CD8-positive, alpha-beta T cell (primary cell): ENCODE measurements at regions of chr14 and their contacts with region 1.

Region 1: DNA sequence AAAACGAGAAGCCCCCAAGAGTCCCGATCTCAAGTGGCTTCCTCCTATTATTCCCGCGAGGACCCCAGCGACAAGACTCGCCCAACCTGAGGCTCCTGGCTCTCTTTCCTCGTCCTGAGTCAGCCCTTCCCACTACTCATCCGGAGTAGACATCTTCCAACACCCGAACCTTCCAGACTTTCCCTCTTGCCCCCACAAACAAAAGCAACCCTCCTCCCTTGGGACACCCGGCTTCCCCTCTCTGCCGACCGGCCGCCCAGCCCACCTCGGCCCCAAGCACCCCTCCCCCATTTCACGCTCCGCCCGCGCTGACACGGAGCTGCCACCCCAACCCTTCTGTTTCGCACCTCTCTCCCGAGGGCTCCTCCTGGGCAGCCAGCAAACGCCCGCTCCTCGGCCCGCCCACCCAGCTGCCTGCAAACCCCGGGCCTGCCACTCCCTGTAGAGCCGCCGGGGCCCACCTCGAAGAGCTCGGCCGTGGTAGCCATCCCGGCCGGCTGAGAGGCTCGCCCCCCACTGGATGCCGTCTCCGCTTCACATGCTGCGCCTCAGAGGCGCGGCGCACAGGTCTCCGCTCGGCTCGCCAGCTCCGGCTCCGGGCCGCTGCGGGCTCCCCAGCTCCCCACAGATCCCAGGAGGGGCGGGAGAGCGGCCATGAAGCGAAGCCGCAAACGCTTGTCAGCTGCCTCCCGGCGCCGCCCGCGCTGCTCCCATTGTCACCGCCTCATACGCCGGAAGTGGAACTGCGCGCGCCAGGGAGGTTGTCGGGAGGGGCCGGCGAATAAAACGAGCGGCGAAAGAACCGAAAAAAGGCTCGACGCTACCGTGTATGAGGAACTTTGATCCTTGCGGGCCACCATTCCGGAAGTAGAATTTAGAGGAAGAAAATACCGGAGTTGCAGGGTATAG is at the starts of genes AP5M1 and EXOC5:
- DNase-seq: peak; percentile 80 to 97 (median 91)
- ATAC-seq: peak; percentile 80
- H3K4me3 ChIP-seq: peak within 1 kb of the TSS; percentile 77 to 84
- H3K4me3 Mint-ChIP-seq: peak within 1 kb of the TSS; percentile 99
- H3K27ac ChIP-seq: peak within 1 kb of the TSS; percentile 85 to 90
- H3K27ac Mint-ChIP-seq: peak within 1 kb of the TSS; percentile 100
- H3K4me1 ChIP-seq: peaks cover 35% of the 10 kb centered on the region
- H3K4me1 Mint-ChIP-seq: peaks cover 70% of the 10 kb centered on the region
- H3K27me3 ChIP-seq: no peaks in the 10 kb centered on the region
- H3K27me3 Mint-ChIP-seq: no peaks in the 10 kb centered on the region
- CTCF ChIP-seq: no peak
- total RNA-seq, gene AP5M1: 38.5 to 42.4 TPM
- total RNA-seq, gene EXOC5: 17.0 to 17.8 TPM

Region 2: DNA sequence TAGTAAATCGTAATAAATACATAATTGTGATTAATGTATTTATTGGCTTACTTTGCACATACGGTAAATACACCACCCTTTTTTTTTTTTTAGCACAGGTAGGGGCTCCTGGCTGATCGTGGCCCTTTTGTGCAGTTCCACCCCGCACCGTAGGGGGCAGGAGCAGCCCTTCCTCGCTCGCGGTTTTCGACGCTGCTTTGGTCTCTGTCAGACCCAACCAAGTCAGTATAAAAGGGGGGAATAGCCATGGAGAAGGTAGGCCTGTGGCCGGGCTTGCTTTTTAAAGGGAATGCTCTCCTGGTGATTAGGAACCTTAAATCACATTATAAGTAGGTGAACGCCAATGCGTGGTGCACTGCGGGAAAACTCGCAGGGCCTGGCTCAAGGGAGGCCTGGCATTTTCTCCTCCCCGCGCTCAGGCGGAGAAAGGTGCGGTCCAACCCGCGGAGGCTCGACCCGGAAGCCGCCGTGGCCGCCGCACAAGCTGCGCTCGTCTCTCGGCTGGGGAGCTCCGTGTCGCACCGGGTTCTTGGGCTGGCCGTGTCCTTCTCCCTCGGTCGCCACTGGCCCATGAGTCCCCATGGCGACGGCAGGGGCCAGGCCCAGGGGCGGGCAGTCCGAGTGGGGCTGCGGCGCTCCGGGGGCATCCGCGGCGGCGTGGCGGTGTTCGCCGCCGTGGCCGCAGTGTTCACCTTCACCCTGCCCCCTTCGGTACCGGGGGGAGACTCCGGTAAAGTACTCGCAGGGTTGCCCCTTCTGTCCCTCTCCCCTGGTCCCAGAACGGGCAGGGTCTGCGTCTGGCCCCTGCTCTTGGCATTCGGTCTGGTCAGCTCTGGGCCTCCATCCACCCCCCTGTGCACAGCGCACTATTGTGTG is 688.8 kb before region 1 on chr14 and contains the start of gene TMEM260:
- CTCF ChIA-PET with region 1: no interaction called
- POLR2A ChIA-PET with region 1: interaction called, 5 read pairs
- intact Hi-C with region 1: loop called (anchors 1 to 2 kb)
- DNase-seq: peak; percentile 84 to 95 (median 91)
- ATAC-seq: peak; percentile 93
- H3K4me3 ChIP-seq: peak within 1 kb of the TSS; percentile 74 to 83
- H3K4me3 Mint-ChIP-seq: peak within 1 kb of the TSS; percentile 90
- H3K27ac ChIP-seq: peak within 1 kb of the TSS; percentile 72 to 75
- H3K27ac Mint-ChIP-seq: peak within 1 kb of the TSS; percentile 94
- H3K4me1 ChIP-seq: peaks cover 27% of the 10 kb centered on the region
- H3K4me1 Mint-ChIP-seq: peaks cover 40% of the 10 kb centered on the region
- H3K27me3 ChIP-seq: no peaks in the 10 kb centered on the region
- H3K27me3 Mint-ChIP-seq: peaks cover 2% of the 10 kb centered on the region
- CTCF ChIP-seq: peak; percentile 82
- total RNA-seq, gene TMEM260: 4.3 to 6.4 TPM

Region 3: GRCh38 chr14:58199726-58200479 is 931.5 kb after region 1 on chr14 and contains the start of gene ACTR10:
- CTCF ChIA-PET with region 1: no interaction called
- POLR2A ChIA-PET with region 1: no interaction called
- intact Hi-C with region 1: loop called in 1 of 2 experiments (anchors 10 kb)
- DNase-seq: peak; percentile 76 to 95 (median 85)
- ATAC-seq: peak; percentile 87
- H3K4me3 ChIP-seq: peak within 1 kb of the TSS; percentile 75 to 92
- H3K4me3 Mint-ChIP-seq: peak within 1 kb of the TSS; percentile 94
- H3K27ac ChIP-seq: peak within 1 kb of the TSS; percentile 86 to 87
- H3K27ac Mint-ChIP-seq: peak within 1 kb of the TSS; percentile 98
- H3K4me1 ChIP-seq: peaks cover 25% of the 10 kb centered on the region
- H3K4me1 Mint-ChIP-seq: peaks cover 46% of the 10 kb centered on the region
- H3K27me3 ChIP-seq: no peaks in the 10 kb centered on the region
- H3K27me3 Mint-ChIP-seq: no peaks in the 10 kb centered on the region
- CTCF ChIP-seq: no peak
- total RNA-seq, gene ACTR10: 47.5 to 47.7 TPM